ENCODE measurements at regions of chr2 and their contacts with region 1.

Region 1: DNA sequence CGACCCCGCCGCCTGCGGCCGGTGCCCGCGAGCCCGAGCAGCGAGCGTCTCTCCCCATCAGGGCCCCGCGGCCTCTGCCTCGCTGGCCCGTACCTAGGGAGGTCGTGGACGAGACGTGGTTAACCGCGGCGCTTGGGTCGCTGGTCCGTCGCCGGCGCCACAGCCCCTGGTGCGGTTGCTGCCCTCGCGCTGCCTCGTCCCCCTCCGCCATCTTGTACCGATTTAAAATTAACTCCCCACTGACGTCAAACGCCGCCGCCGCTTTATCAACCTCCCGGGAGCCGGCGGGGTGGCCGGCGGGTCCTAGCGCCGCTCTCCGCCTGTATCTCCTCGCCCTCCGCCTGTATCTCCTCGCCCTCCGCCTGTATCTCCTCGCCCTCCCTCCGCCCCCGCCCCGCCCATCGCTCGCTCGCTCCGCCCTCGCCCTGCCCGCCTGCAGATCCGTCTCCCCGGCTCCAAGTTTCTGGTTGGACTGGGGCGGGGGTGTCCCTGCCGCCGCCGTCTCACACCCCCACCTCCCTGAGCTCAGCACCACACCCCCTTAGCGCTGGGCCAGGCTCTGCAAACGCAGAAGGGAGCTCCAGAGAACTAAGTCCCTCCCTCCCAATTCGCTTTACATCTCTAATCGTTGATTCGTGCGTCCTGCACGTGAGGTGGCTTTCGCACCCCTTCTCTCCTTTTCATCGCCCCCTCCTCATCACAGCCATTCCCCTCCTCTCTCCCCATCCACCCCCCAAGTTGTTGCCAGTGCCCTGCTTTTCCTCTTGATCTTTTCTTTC is at the start of gene ATL2:
- DNase-seq: peak; percentile 97
- ATAC-seq: peak; percentile 92
- H3K4me3 Mint-ChIP-seq: peak within 1 kb of the TSS; percentile 87
- H3K27ac Mint-ChIP-seq: peak within 1 kb of the TSS; percentile 85
- H3K4me1 Mint-ChIP-seq: peaks cover 47% of the 10 kb centered on the region
- H3K27me3 Mint-ChIP-seq: peaks cover 6% of the 10 kb centered on the region
- total RNA-seq, gene ATL2: 55.5 to 56.7 TPM

Region 2: DNA sequence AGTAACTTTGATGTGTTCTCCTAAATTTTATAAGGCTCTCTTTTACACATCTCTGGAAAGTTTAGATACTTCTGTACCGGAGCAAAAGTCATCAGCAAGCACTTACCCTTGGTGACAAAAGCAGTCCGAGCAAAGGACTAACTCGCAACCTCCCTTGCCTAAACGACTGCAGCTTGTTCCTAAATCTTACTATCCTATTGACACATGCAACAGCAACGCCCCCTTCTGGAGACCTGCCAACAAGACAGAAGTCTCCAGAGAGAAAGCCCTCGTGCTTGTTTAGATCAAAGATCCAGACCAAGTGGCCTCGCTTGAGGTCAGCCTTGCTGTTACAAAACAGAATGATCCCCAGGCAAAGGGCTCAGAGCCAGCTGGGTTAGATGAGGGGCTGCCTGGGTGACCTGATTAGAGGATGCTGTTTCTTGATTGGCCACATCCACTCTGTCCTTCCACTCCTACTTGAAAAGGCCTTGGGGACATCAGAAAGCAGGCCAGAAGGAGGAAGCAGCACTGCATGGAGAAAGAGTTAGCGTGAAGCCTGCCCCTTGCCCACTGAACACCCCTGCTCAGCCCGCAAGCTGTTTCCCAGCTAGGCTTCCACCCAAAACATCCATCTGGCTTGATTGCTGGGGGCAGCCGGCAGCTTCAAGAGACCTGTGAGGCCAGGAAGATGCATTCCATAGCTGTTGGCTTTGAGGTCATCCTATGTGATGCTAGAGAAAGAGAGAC is 131.2 kb after region 1 on chr2:
- CTCF ChIA-PET with region 1: interaction called, 12 read pairs
- DNase-seq: peak; percentile 88
- ATAC-seq: peak; percentile 92
- H3K4me3 Mint-ChIP-seq: no peak overlapping the region
- H3K27ac Mint-ChIP-seq: no peak overlapping the region
- H3K4me1 Mint-ChIP-seq: peaks cover 14% of the 10 kb centered on the region
- H3K27me3 Mint-ChIP-seq: peaks cover 3% of the 10 kb centered on the region